H1 (cell line): ENCODE measurements at regions of chr5 and their contacts with region 1.

Region 1: DNA sequence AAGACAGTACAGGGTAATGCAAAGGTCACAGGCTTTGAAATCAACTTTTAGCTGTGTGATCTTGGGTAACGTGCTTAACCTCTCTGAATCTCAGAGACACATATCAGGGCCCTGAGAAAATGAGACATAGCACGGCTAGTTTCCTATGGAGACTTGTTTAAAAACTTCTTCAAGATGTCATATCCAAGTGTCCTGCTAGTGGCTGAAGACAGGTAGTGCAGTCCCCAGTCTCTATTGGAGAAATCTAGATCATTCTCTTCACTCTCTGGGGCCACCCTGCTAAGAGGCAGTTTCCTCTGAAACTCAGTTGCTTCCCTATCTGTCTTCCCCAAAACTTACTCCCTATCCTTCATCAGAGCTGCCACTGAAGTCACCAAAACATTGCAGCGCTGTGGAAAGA is 30.3 kb upstream of the GRXCR2 start:
- DNase-seq: no peak
- H3K4me3 ChIP-seq: no peak overlapping the region
- H3K27ac ChIP-seq: no peak overlapping the region
- H3K4me1 ChIP-seq: no peaks in the 10 kb centered on the region
- H3K27me3 ChIP-seq: no peaks in the 10 kb centered on the region
- CTCF ChIP-seq: peak in 2 of 3 experiments; percentile 7 to 39; a peak in 2 of 4 replicates
- EP300 ChIP-seq: no peak
- POLR2A ChIP-seq: no peak
- RAD21 ChIP-seq: 0 out of 4 replicates have a peak, but pooled peaks have one; percentile 13 to 15

Region 2: DNA sequence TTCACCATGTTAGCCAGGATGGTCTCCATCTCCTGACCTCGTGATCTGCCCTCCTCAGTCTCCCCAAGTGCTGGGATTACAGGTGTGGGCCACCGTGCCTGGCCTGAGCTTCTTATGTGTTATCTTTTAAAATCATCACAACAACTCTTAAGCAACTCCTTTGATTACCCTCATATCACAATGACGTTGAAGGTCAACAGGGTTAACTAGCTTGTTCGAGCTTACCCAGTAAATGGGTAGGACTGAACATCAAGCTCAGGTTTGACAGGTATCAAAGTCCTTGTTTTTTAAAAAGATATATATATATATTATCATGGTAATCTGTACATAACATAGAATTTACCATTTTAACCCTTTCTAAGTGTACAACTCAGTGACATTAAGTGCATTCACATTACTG is 33.4 kb before region 1 on chr5:
- CTCF ChIA-PET with region 1: no interaction called
- POLR2A ChIA-PET with region 1: no interaction called
- DNase-seq: no peak
- H3K4me3 ChIP-seq: no peak overlapping the region
- H3K27ac ChIP-seq: no peak overlapping the region
- H3K4me1 ChIP-seq: no peaks in the 10 kb centered on the region
- H3K27me3 ChIP-seq: no peaks in the 10 kb centered on the region
- CTCF ChIP-seq: no peak
- EP300 ChIP-seq: no peak
- POLR2A ChIP-seq: no peak
- RAD21 ChIP-seq: no peak

Region 3: DNA sequence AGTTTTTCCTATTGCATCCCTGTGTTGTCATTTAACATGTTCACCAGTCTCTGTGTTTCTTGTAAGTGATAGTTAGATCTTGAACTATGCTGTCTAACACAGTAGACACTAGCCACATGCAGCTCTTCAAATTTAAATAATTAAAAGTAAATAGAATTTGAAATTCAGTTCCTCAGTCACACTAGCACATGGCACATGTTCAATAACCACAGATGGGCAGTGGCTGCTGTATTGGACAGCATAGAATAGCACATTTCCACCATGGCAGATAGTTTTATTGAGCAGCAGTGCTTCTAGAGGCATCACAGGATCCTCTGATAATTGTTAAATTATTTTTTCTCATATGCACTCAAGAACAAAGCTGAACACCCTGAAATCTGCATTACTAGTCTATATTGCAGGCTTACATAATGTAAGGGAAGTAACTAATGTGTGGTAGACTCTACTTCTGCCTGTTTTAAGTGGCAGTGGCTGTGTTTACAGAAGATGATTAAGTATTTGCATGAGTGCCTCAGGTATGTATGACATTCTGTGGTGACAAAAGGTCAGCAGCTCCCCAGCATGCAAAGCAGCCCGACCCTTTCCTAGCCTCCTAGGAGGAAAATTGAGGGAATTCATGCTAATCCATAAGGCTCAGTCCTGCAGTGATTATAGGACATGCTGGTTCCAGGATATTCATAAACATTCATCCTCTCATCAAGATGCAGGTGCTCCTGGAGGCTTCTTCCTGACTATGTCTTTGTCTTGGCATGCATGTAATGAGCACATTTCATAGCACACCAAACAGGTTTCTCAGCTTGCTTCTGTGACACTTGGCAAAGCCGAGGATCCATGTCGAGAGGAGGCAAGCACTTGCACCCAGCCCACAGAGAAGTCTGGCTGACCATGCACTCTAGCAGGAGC is 78.7 kb after region 1 on chr5:
- CTCF ChIA-PET with region 1: interaction called, 54 read pairs
- POLR2A ChIA-PET with region 1: no interaction called
- DNase-seq: no peak
- H3K4me3 ChIP-seq: no peak overlapping the region
- H3K27ac ChIP-seq: no peak overlapping the region
- H3K4me1 ChIP-seq: peaks cover 0 to 7% (median 3%) of the 10 kb centered on the region in 4 experiments; a peak in 2 of 7 replicates
- H3K27me3 ChIP-seq: no peaks in the 10 kb centered on the region
- CTCF ChIP-seq: no peak
- EP300 ChIP-seq: no peak
- POLR2A ChIP-seq: no peak
- RAD21 ChIP-seq: no peak